ENCODE measurements at regions of chr6 and their contacts with region 1.

Region 1: DNA sequence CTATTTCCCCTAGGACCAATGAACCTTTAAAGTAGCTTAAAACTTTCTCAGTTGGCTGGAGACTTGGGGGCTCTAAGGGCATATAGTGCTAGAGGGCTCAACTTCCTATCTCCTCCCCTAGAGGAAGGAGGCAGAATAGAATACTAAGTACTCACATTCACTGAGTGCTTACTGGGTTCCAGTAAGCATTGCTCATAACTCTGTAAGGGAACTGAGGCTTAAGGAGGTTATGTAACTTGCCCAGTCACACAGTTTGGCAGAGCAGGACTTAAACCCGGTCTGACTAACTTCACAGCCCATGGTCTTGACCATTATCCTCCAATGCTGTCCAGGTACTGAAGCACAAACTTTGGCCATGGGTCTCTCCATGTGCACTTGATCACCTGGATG is 12.5 kb downstream of the SESN1 start:
- DNase-seq: peak; percentile 64
- H3K4me3 ChIP-seq: no peak overlapping the region
- H3K27ac ChIP-seq: peak overlapping the region; percentile 86
- H3K4me1 ChIP-seq: peaks cover 75% of the 10 kb centered on the region
- CTCF ChIP-seq: peak; percentile 50; the same call in 1 of the 2 replicates

Region 2: GRCh38 chr6:109095027-109095834 is 13.0 kb after region 1 on chr6 and contains the start of gene CEP57L1:
- CTCF ChIA-PET with region 1: interaction called, 3 read pairs
- POLR2A ChIA-PET with region 1: interaction called, 54 read pairs
- intact Hi-C with region 1: no loop called
- DNase-seq: peak; percentile 98
- H3K4me3 ChIP-seq: peak within 1 kb of the TSS; percentile 92
- H3K27ac ChIP-seq: peak within 1 kb of the TSS; percentile 87
- H3K4me1 ChIP-seq: peaks cover 25% of the 10 kb centered on the region
- CTCF ChIP-seq: peak; percentile 46; the same call in 1 of the 2 replicates
- total RNA-seq, gene CEP57L1: 22.7 and 26.7 TPM in 2 replicates

Region 3: DNA sequence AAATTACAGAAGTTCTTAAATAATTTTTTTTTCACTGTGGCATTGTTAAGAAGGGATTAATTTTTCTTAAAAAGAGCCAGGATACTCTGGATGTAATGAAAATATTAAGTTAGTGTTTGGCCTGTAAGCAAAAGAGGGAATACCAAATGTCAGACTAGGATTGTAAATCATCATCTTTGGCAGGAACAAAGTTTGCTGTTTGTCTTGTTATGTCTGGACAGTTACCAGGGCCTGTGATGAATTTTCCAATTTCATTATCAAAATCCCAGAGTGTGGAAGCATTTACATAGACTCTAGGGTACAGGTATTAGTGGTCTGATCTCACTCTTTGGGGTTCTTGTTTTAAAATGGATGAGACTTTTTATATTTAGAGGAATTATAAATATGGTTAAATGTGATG is 39.2 kb after region 1 on chr6:
- CTCF ChIA-PET with region 1: no interaction called
- POLR2A ChIA-PET with region 1: no interaction called
- intact Hi-C with region 1: no loop called
- DNase-seq: no peak
- H3K4me3 ChIP-seq: no peak overlapping the region
- H3K27ac ChIP-seq: no peak overlapping the region
- H3K4me1 ChIP-seq: peaks cover 49% of the 10 kb centered on the region
- CTCF ChIP-seq: no peak

Measured in OCI-LY7 (cell line).